Activated naive CD4-positive, alpha-beta T cell treated with anti-CD3 and anti-CD28 coated beads, Interleukin-2, amount 10 ng/mL, durations not matched to agents 7 days and 5 days (primary cell): ENCODE measurements at regions of chr15 and their contacts with region 1.

Region 1: GRCh38 chr15:90143166-90143655 is 40.9 kb upstream of the IDH2 start:
- DNase-seq: peak; percentile 83
- H3K4me3 Mint-ChIP-seq: peak overlapping the region; percentile 18
- H3K27ac Mint-ChIP-seq: peak overlapping the region; percentile 84
- H3K4me1 Mint-ChIP-seq: peaks cover 41% of the 10 kb centered on the region
- H3K27me3 Mint-ChIP-seq: peaks cover 12% of the 10 kb centered on the region

Region 2: GRCh38 chr15:89614164-89614563 is 529.0 kb before region 1 on chr15:
- CTCF ChIA-PET with region 1: no interaction called
- DNase-seq: no peak
- H3K4me3 Mint-ChIP-seq: no peak overlapping the region
- H3K27ac Mint-ChIP-seq: no peak overlapping the region
- H3K4me1 Mint-ChIP-seq: no peaks in the 10 kb centered on the region
- H3K27me3 Mint-ChIP-seq: no peaks in the 10 kb centered on the region

Region 3: GRCh38 chr15:90099868-90100831 is 43.1 kb before region 1 on chr15:
- CTCF ChIA-PET with region 1: interaction called, 18 read pairs
- DNase-seq: no peak
- H3K4me3 Mint-ChIP-seq: peak overlapping the region; percentile 78
- H3K27ac Mint-ChIP-seq: peak overlapping the region; percentile 97
- H3K4me1 Mint-ChIP-seq: peaks cover 73% of the 10 kb centered on the region
- H3K27me3 Mint-ChIP-seq: peaks cover 24% of the 10 kb centered on the region

Region 4: GRCh38 chr15:90221246-90221900 is 78.2 kb after region 1 on chr15:
- CTCF ChIA-PET with region 1: interaction called, 25 read pairs
- DNase-seq: peak; percentile 51
- H3K4me3 Mint-ChIP-seq: no peak overlapping the region
- H3K27ac Mint-ChIP-seq: no peak overlapping the region
- H3K4me1 Mint-ChIP-seq: peaks cover 12% of the 10 kb centered on the region
- H3K27me3 Mint-ChIP-seq: no peaks in the 10 kb centered on the region

Region 5: GRCh38 chr15:90286678-90287077 is 143.5 kb after region 1 on chr15:
- CTCF ChIA-PET with region 1: interaction called, 14 read pairs
- DNase-seq: peak; percentile 57
- H3K4me3 Mint-ChIP-seq: no peak overlapping the region
- H3K27ac Mint-ChIP-seq: no peak overlapping the region
- H3K4me1 Mint-ChIP-seq: no peaks in the 10 kb centered on the region
- H3K27me3 Mint-ChIP-seq: no peaks in the 10 kb centered on the region

Region 6: GRCh38 chr15:90351479-90352108 is 208.4 kb after region 1 on chr15:
- CTCF ChIA-PET with region 1: no interaction called
- DNase-seq: no peak
- H3K4me3 Mint-ChIP-seq: peak overlapping the region; percentile 84
- H3K27ac Mint-ChIP-seq: peak overlapping the region; percentile 37
- H3K4me1 Mint-ChIP-seq: peaks cover 24% of the 10 kb centered on the region
- H3K27me3 Mint-ChIP-seq: peaks cover 45% of the 10 kb centered on the region